ENCODE measurements at regions of chr11 and their contacts with region 1.

Region 1: GRCh38 chr11:62081378-62082291 is 42.2 kb upstream of the INCENP start:
- DNase-seq: peak; percentile 72 to 76
- ATAC-seq: peak; percentile 89 to 94
- H3K4me3 ChIP-seq: no peak overlapping the region
- H3K27ac ChIP-seq: peak overlapping the region; percentile 20 to 66; a peak in 5 of 6 replicates
- H3K4me1 ChIP-seq: peaks cover 9% of the 10 kb centered on the region; the same call in 2 of the 3 replicates
- CTCF ChIP-seq: peak; percentile 96
- EP300 ChIP-seq: no peak
- POLR2A ChIP-seq: no peak
- RAD21 ChIP-seq: peak; percentile 98 to 99

Region 2: DNA sequence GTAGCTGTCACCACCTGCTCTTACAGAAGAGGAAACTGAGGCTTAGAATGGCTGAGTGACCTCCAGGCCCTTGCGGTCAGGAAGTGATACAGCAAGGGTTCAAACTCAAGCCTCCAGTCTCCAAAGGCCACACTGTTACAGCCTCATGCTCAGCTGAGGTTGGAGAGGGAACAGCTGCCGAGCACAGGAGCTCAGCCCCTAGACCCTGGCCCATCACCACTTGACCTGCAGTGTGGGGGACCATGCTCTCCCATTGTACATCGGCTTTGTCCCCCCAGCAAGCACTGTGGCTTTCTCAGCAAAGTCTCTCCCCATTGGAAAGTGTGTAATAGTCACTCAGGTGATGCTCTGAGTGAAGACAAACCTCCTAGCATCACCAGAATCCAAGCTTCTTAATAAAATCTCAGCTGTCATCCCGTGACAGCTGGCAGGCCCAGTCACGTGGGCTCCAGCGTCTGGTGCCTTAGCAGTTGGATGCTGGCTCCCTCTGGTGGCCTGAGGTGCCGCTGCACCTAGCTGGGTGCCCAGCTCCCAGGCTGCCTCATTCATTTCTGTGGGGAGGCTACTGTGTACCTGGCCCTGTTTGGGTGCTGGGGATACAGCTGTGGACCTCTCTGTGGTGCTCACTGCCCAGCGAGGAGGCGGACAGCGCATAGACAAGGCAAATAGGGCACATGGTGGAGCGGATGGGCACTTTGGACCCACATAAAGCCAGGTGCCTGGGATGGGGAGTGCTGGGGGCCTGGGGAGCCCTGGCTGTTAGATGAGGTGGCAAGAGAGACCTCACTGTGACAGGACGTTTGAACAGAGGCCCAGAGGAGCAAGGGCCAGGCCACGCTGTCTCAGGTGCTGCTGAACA is 348.3 kb before region 1 on chr11:
- CTCF ChIA-PET with region 1: no interaction called
- POLR2A ChIA-PET with region 1: no interaction called
- DNase-seq: peak; percentile 81 to 95
- ATAC-seq: peak; percentile 69 to 89
- H3K4me3 ChIP-seq: no peak overlapping the region
- H3K27ac ChIP-seq: 0 out of 6 replicates have a peak overlapping the region, but pooled peaks of 1 of the 2 experiments have one; percentile 41
- H3K4me1 ChIP-seq: peaks cover 27% of the 10 kb centered on the region
- CTCF ChIP-seq: peak; percentile 94
- EP300 ChIP-seq: no peak
- POLR2A ChIP-seq: no peak
- RAD21 ChIP-seq: peak; percentile 93 to 97

Region 3: DNA sequence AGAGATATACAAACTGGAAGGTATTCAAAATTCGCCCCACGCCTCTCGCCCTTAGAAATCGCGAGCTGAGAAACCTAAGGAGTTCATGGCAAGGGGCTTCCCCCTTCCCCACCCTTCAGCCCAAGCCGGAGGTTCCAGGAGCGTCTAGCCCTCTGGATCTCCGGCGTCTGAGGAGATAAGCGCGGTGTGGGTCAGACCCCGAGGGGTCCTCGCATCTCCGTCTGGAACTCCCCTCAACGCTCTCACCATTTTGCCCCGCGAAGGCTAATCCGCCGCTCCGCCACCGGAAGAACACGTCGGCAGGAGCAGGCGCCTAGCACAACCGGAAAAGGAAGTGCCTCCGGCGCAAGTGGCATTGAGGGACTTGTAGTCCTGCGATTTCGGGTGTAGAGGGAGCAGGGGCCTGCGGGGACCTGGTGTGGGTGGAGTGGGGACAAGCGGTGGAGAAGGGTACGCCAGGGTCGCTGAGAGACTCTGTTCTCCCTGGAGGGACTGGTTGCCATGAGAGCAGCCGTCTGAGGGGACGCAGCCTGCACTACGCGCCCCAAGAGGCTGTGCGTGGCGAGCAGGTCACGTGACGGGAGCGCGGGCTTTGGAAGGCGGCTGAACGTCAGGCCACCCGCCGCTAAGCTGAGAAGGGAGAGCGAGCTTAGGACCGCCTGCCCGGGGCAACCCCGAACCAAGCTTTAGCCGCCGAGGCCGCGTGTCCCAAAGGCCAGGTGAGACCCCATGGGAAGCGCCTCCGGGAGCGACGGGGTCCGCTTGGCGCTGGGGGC is 289.1 kb before region 1 on chr11 and contains the starts of genes FEN1 and TMEM258:
- CTCF ChIA-PET with region 1: interaction called, 38 read pairs
- POLR2A ChIA-PET with region 1: interaction called, 5 read pairs
- DNase-seq: peak; percentile 92 to 95
- ATAC-seq: peak; percentile 84 to 90
- H3K4me3 ChIP-seq: peak within 1 kb of the TSS; percentile 56
- H3K27ac ChIP-seq: peak within 1 kb of the TSS; percentile 92 to 100
- H3K4me1 ChIP-seq: peaks cover 24% of the 10 kb centered on the region; the same call in 1 of the 3 replicates
- CTCF ChIP-seq: no peak
- EP300 ChIP-seq: no peak
- POLR2A ChIP-seq: peak; percentile 79
- RAD21 ChIP-seq: no peak
- polyA plus RNA-seq, gene FEN1: 36.3 and 38.4 TPM in 2 replicates
- polyA plus RNA-seq, gene TMEM258: 280 and 375 TPM in 2 replicates

Region 4: GRCh38 chr11:61885166-61885778 is 196.4 kb before region 1 on chr11:
- CTCF ChIA-PET with region 1: interaction called, 24 read pairs
- POLR2A ChIA-PET with region 1: no interaction called
- DNase-seq: no peak
- ATAC-seq: peak; percentile 8 to 26; a peak in 2 of 6 replicates
- H3K4me3 ChIP-seq: no peak overlapping the region
- H3K27ac ChIP-seq: 0 out of 6 replicates have a peak overlapping the region, but pooled peaks of 1 of the 2 experiments have one; percentile 30
- H3K4me1 ChIP-seq: peaks cover 31% of the 10 kb centered on the region
- CTCF ChIP-seq: no peak
- EP300 ChIP-seq: no peak
- POLR2A ChIP-seq: no peak
- RAD21 ChIP-seq: no peak

Region 5: GRCh38 chr11:61923166-61924063 is 158.2 kb before region 1 on chr11:
- CTCF ChIA-PET with region 1: interaction called, 27 read pairs
- POLR2A ChIA-PET with region 1: no interaction called
- DNase-seq: no peak
- ATAC-seq: peak in 1 of 2 experiments; percentile 11; a peak in 2 of 6 replicates
- H3K4me3 ChIP-seq: no peak overlapping the region
- H3K27ac ChIP-seq: peak overlapping the region; percentile 31 to 53; a peak in 4 of 6 replicates
- H3K4me1 ChIP-seq: peaks cover 28% of the 10 kb centered on the region
- CTCF ChIP-seq: no peak
- EP300 ChIP-seq: no peak
- POLR2A ChIP-seq: no peak
- RAD21 ChIP-seq: no peak

Region 6: DNA sequence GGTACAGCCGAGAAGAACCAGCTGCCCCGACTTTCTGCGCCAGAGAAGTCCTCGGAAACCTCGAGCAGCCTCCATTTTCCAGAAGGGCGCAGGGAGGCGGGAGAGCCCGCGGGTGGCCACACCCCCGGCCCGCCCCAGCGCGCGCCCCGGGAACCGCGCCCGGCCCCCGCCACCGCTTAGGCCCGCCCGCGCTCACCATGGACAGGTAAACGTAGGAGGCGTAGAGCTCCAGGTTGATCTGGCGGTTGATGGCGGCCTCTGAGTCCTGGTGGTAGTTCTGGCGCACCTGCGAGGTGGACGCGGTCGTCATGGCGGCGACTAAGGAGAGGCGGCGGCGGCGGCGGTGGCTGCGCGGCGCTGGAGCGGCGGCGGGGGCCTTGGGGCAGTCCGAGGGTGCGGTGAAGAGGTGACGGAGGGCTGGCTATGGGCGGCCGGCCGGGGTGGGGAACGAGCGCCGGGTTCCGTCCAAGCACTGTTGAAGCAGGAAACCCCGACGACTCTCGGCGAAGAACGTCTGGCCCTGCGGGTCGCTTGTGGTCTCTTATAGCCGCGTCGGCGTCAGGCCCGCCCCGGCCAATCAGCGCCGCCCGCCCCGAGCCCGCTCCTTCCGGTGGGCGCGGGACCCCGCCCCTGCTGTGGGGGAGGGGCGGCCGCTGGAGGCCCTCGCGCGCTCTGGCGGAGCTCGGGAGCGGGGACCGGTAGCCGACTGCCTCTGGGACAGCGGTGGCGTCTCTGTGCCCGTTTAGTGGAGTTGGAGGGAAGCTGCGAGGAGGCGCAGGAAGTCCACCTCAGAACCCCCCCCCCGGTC is 114.3 kb before region 1 on chr11 and contains the start of gene FTH1:
- CTCF ChIA-PET with region 1: interaction called, 28 read pairs
- POLR2A ChIA-PET with region 1: interaction called, 18 read pairs
- DNase-seq: peak; percentile 77 to 95
- ATAC-seq: peak; percentile 16 to 62
- H3K4me3 ChIP-seq: peak within 1 kb of the TSS; percentile 96
- H3K27ac ChIP-seq: peak within 1 kb of the TSS; percentile 97 to 99
- H3K4me1 ChIP-seq: peaks cover 59% of the 10 kb centered on the region
- CTCF ChIP-seq: no peak
- EP300 ChIP-seq: no peak; a peak in 1 of 5 replicates
- POLR2A ChIP-seq: peak; percentile 93
- RAD21 ChIP-seq: peak in 1 of 2 experiments; percentile 44; a peak in 2 of 5 replicates
- polyA plus RNA-seq, gene FTH1: 2,791 and 4,959 TPM in 2 replicates

Region 7: DNA sequence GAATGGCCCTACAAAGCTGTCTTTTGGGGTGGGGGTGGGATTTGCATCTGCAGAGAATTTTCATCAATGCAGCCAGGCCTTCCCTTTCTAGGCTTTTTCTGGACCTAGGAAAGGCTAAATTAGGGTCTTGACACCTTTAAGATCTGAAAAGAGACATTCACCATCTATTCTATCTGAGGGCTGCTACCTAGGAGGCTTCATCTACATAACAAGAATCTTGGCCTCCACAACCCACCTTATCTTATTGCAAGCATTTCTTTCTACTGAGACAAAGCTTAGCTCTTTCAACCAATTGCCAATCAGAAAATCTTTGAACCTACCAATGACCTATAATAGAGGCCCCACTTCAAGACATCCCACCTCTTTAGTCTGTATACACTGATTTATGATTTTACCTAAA is 21.5 kb after region 1 on chr11:
- CTCF ChIA-PET with region 1: interaction called, 39 read pairs
- POLR2A ChIA-PET with region 1: no interaction called
- DNase-seq: no peak
- ATAC-seq: no peak
- H3K4me3 ChIP-seq: no peak overlapping the region
- H3K27ac ChIP-seq: no peak overlapping the region
- H3K4me1 ChIP-seq: peaks cover 5% of the 10 kb centered on the region; the same call in 1 of the 3 replicates
- CTCF ChIP-seq: no peak
- EP300 ChIP-seq: no peak
- POLR2A ChIP-seq: no peak
- RAD21 ChIP-seq: no peak

Region 8: GRCh38 chr11:62233730-62234129 is 152.1 kb after region 1 on chr11:
- CTCF ChIA-PET with region 1: no interaction called
- POLR2A ChIA-PET with region 1: no interaction called
- DNase-seq: no peak
- ATAC-seq: no peak
- H3K4me3 ChIP-seq: no peak overlapping the region
- H3K27ac ChIP-seq: no peak overlapping the region
- H3K4me1 ChIP-seq: no peaks in the 10 kb centered on the region
- CTCF ChIP-seq: no peak
- EP300 ChIP-seq: no peak
- POLR2A ChIP-seq: no peak
- RAD21 ChIP-seq: no peak